ENCODE measurements at regions of chr1 and their contacts with region 1.

Region 1: GRCh38 chr1:234309598-234310459 is 63.4 kb upstream of the COA6 start:
- DNase-seq: no peak
- H3K4me3 ChIP-seq: no peak overlapping the region
- H3K27ac ChIP-seq: no peak overlapping the region
- H3K4me1 ChIP-seq: peaks cover 0 to 6% (median 0%) of the 10 kb centered on the region in 4 donors
- H3K27me3 ChIP-seq: no peaks in the 10 kb centered on the region
- CTCF ChIP-seq: peak in 3 of 4 experiments; percentile 44 to 78 (median 49)
- EP300 ChIP-seq: no peak
- POLR2A ChIP-seq: no peak

Region 2: GRCh38 chr1:234114648-234115307 is 195.1 kb before region 1 on chr1:
- intact Hi-C with region 1: loop called (anchors 2 kb)
- DNase-seq: no peak
- H3K4me3 ChIP-seq: no peak overlapping the region
- H3K27ac ChIP-seq: no peak overlapping the region
- H3K4me1 ChIP-seq: no peaks in the 10 kb centered on the region
- H3K27me3 ChIP-seq: peaks cover 0 to 8% (median 0%) of the 10 kb centered on the region in 3 donors
- CTCF ChIP-seq: peak in 2 of 4 experiments; percentile 24 to 56
- EP300 ChIP-seq: no peak
- POLR2A ChIP-seq: no peak